ENCODE measurements at regions of chr17 and their contacts with region 1.

Region 1: DNA sequence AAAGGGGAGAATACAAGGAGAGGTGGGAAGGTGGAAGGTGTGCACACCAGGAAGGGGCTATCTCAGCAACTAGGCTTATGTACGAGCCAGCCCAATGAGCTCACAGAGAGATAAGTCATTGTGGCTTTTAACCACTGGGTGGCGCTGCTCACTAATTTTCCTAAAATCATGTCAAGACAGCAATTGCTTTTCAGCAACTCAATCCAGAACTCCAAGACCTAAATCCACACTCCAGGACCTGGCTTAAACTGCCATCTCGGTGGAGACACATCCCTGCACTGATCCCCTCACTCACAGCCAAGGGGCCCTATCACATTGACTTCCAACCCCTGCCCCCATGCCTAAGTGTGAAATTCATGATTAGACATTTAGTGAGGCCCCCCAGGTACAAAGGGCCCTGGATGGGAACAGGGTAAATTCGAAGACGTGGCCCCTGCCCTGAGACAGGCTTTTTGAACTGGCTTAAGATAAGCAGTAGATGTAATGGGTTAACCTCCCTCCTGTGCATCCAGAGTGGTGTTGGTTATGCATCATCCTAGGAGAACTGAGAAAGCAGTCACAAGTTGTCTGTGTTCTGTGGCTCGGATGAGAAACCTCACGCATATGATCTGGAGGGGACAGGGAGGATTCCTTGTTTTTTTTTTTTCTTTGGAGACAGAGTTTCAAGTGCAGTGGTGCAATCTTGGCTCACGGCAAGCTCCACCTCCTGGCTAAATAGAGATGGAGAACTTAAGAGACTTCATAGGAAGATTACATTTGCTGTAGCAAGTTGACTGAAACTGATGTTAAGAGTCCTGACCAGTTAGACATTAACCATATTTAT is 11.5 kb downstream of the CCL16 start:
- DNase-seq: peak; percentile 23
- H3K4me3 ChIP-seq: no peak overlapping the region
- CTCF ChIP-seq: peak; percentile 66

Region 2: DNA sequence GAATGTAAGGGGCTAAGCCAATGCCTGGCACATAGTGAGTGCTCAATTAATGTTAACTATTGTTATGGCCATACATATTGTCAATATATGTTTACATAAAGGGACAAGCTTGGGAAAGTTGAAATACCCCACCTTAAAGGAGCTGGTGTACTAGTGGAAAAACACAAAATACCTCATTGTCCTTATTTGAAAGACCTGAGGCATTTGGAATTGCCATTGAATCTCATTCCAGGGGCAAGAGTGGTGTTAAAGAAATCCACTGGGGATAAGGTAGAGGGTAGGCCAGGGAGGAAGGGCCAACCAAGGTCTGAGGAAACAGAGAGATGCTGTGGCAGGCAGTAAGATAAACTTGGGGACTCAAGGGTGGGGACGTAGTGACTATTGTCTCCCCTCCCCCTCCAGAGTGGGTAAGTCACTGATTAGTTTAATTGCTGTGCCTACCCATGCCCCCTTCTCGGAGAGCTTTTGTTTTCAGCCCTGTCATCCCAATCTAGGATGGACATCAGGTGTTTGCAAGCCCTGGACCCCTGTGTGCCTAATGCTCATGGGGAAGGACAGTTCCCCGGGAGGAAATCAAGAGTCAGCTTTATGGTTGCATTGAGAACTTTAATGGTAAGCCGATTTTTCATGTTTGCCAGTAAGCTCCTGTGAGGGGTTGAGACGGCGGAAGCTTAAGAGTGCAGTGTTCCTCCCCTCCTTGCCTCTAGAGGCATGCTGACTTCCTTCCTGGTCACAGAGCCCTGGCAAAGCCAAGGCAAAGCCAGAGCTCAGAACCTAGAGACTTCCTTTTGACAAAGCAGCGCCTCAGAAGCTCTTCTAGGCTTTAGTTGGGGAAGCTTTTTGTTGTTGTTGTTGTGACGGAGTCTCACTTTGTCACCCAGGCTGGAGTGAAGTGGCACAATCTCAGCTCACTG is 98.6 kb before region 1 on chr17:
- CTCF ChIA-PET with region 1: no interaction called
- POLR2A ChIA-PET with region 1: no interaction called
- DNase-seq: no peak
- H3K4me3 ChIP-seq: no peak overlapping the region
- CTCF ChIP-seq: no peak

Region 3: DNA sequence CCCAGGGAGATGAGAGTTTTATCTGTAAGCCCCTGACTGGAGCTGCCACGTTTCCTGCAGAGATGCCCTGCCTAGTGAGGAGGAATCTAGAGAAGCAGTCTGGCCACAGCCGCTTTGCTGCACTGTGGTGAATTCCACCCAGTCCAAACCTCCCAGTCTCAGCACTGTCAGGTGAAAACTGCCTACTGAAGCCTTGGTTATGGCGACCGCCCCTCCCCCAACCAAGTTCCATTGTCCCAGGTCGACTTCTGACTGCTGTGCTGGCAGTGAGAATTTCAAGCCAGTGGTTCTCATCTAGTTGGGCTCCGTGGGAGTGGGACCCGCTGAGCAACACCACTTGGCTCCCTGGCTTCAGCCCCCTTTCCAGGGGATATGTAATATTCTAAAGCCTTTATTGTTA is 16.0 kb before region 1 on chr17:
- CTCF ChIA-PET with region 1: interaction called, 18 read pairs
- POLR2A ChIA-PET with region 1: no interaction called
- DNase-seq: no peak
- H3K4me3 ChIP-seq: no peak overlapping the region
- CTCF ChIP-seq: no peak

Region 4: GRCh38 chr17:36486204-36487194 is 516.7 kb after region 1 on chr17 and contains the start of gene ZNHIT3:
- CTCF ChIA-PET with region 1: interaction called, 10 read pairs
- POLR2A ChIA-PET with region 1: no interaction called
- DNase-seq: peak; percentile 67
- H3K4me3 ChIP-seq: peak within 1 kb of the TSS; percentile 91
- CTCF ChIP-seq: no peak

Measured in AG04449 (cell line).